Esophagus muscularis mucosa (tissue), 4 donors: ENCODE measurements at regions of chr7 and their contacts with region 1.

Region 1: GRCh38 chr7:47435889-47436312 is 146.0 kb downstream of the TNS3 start:
- DNase-seq: no peak
- H3K4me3 ChIP-seq: no peak overlapping the region
- H3K27ac ChIP-seq: no peak overlapping the region
- H3K4me1 ChIP-seq: peaks cover 0 to 7% (median 2%) of the 10 kb centered on the region in 4 donors
- H3K27me3 ChIP-seq: no peaks in the 10 kb centered on the region
- CTCF ChIP-seq: peak; percentile 79 to 87 (median 85)
- EP300 ChIP-seq: no peak
- POLR2A ChIP-seq: no peak

Region 2: DNA sequence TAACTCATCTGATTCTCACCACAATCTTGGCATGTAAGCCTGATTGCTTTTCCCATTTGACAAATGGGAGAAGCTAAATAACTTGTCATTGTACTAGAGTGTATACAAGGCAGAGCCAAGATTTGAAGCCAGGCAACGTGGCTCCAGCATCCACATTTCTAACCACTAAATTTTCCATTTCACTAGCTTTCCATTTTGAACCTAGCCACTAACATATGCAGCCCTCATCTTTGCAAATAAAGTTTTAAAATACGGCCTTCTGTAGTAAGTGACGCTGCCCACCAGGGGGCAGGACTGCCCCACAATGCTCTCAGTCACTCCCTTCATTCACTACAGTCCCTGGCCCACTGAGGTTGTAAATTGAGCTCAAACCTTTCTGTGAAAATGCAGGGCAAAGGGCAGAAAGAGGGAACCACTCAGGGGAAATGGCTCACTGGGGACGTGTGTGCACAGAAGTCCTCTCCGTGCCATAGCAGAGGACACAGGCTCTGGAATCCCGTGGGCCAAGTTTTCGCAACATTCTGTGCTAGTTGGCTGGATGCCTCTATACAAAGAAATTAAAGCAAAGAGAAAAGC is 169.7 kb before region 1 on chr7:
- intact Hi-C with region 1: loop called (anchors 10 kb)
- DNase-seq: no peak
- H3K4me3 ChIP-seq: no peak overlapping the region
- H3K27ac ChIP-seq: no peak overlapping the region
- H3K4me1 ChIP-seq: peaks cover 3 to 13% (median 12%) of the 10 kb centered on the region in 4 donors
- H3K27me3 ChIP-seq: peaks cover 0 to 4% (median 0%) of the 10 kb centered on the region in 4 donors
- CTCF ChIP-seq: peak; percentile 90 to 95 (median 91)
- EP300 ChIP-seq: no peak
- POLR2A ChIP-seq: no peak

Region 3: DNA sequence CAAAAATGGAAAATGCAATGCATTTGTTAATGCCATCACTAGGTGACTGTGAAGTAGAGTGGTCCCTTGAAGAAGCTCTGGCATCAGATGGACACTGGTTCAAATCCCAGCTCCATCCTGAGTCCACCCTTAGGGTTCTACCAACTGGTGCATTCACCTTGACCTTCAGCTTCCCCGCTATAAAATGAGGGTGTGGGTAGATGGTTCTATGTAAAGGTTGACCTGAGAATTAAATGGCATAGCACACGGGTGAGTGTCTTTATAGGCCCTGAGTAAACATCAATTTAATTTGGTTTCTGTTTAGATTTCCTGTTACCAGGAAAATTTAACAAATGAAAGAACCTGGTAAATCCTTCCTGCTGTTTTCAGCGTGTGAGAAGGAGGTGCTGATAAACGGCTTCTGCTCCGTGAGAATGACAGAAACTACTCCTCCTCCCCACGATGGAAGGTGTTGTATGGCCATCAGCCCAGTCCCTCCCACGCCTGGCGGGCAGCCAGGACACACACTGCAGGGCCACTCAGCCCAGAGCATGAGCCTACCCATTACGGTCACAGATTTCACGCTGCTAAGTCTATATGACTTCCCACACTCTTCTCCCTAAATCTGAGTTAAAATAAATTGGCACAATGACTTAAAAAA is 64.1 kb before region 1 on chr7:
- intact Hi-C with region 1: no loop called
- DNase-seq: no peak
- H3K4me3 ChIP-seq: peak overlapping the region in 1 of 4 donors; percentile 2
- H3K27ac ChIP-seq: no peak overlapping the region
- H3K4me1 ChIP-seq: peaks cover 11 to 41% (median 20%) of the 10 kb centered on the region in 4 donors
- H3K27me3 ChIP-seq: no peaks in the 10 kb centered on the region
- CTCF ChIP-seq: no peak
- EP300 ChIP-seq: no peak
- POLR2A ChIP-seq: no peak

Region 4: DNA sequence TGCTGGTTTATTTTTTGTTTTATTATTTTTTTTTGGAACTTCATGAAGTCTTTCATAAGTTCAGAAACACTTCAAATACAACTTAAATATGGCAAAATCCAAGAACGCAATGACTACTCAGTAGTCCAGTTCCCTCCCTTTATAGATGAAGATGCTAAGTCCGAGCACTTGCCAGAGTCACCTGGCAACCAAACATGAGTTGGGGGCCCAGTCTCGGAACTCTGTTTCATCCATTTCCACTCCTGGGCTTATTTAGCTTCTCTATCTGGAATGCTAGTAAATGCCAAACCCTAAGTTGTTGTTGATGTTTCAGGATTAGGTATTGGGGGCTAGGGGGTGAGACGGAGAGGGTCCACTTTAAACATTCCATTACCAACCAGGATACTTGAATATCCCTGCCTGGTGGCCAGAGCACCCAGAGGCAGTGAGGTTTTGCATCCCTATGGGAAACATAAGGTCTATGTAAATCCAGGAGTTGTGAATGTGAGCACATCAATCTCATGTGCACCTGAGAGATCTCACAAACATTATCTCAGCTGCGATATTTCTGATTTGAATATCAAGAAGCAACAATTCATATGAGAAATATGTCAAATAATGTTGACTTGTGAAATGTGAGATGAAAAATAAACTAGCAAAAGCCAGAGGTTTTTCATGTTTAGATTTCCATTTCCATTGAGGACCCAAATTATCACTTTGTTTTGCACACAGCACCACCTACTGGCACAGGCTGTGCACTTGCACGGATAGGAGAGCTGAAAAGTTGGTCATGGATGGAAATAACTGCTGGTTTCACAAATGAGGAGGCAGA is 383.1 kb after region 1 on chr7:
- intact Hi-C with region 1: loop called (anchors 5 kb)
- DNase-seq: no peak
- H3K4me3 ChIP-seq: no peak overlapping the region
- H3K27ac ChIP-seq: no peak overlapping the region
- H3K4me1 ChIP-seq: peaks cover 6 to 25% (median 21%) of the 10 kb centered on the region in 4 donors
- H3K27me3 ChIP-seq: no peaks in the 10 kb centered on the region
- CTCF ChIP-seq: peak; percentile 91 to 95 (median 93)
- EP300 ChIP-seq: no peak
- POLR2A ChIP-seq: no peak